A549 (cell line): ENCODE measurements at regions of chr13 and their contacts with region 1.

Region 1: DNA sequence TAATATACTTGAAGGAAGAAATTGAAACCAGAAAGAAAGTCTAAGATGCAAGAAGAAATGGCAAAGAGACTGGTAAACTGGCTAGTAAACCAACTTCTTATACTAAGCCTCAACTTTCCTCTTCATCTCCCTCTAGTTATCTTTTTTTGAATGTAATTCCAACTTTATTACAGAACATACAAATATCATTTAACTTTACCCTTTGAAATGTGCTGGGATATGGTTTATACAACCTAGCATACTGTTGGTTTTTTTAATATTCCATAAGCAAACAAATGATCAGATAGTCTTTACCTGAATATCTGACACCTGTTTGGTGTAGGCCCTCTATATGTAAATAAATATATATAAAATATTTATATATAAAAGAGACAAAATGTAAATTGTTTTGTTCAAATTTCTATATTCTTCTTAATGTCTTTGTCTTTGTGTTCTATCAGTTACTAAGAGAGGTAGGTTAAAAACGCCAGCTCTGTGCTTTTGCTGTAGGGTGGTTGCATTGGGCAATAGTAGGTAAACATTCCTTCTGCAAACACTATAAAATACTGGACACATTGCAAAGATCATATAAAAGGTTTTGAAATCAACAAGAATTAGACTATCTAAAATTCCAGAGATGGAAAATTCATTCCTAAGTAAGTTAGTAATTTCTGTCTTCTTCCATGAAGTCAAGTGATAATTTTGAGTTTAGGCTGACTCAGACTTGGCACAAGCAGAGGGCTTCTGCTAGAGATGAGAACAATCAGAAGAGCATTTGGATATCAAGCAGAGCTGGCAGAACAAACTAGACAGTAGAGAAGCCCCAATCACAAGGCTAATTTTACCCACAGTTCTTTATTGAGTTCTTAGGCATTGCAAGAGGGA is 383.3 kb downstream of the RFC3 start:
- DNase-seq: peak; percentile 18 to 89
- ATAC-seq: peak; percentile 97 to 98
- H3K4me3 ChIP-seq: no peak overlapping the region
- H3K27ac ChIP-seq: peak overlapping the region; percentile 98 to 99
- H3K4me1 ChIP-seq: peaks cover 22% of the 10 kb centered on the region
- CTCF ChIP-seq: no peak
- EP300 ChIP-seq: peak; percentile 96 to 98
- POLR2A ChIP-seq: no peak
- RAD21 ChIP-seq: peak; percentile 42 to 79

Region 2: GRCh38 chr13:34025746-34026145 is 175.5 kb before region 1 on chr13:
- CTCF ChIA-PET with region 1: no interaction called
- POLR2A ChIA-PET with region 1: no interaction called
- DNase-seq: no peak
- ATAC-seq: no peak
- H3K4me3 ChIP-seq: no peak overlapping the region
- H3K27ac ChIP-seq: peak overlapping the region in 1 of 2 experiments; percentile 49; a peak in 2 of 6 replicates
- H3K4me1 ChIP-seq: peaks cover under 1% of the 10 kb centered on the region; the same call in 1 of the 3 replicates
- CTCF ChIP-seq: no peak
- EP300 ChIP-seq: no peak
- POLR2A ChIP-seq: no peak
- RAD21 ChIP-seq: no peak

Region 3: DNA sequence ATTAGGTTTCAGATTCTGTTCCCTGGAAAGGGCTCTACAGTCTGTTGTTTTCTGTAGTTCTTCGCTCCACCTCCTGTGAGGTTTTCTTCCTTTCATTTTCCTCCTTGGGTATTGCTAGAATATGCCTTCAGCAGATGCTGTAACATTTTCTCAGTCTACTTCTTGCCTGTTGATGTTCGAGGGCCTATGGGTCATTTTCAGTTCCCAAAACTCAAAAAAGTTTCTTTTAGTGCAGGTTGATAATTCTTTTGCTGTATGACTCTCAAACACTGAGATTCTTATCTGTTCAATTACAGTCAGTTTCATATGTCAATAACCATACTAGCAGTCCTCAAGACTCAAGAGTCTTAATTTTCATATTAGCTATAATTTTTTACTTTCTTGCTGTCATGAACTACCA is 115.0 kb before region 1 on chr13:
- CTCF ChIA-PET with region 1: no interaction called
- POLR2A ChIA-PET with region 1: no interaction called
- DNase-seq: no peak
- ATAC-seq: no peak
- H3K4me3 ChIP-seq: no peak overlapping the region
- H3K27ac ChIP-seq: no peak overlapping the region
- H3K4me1 ChIP-seq: no peaks in the 10 kb centered on the region
- CTCF ChIP-seq: no peak
- EP300 ChIP-seq: no peak
- POLR2A ChIP-seq: no peak
- RAD21 ChIP-seq: no peak

Region 4: DNA sequence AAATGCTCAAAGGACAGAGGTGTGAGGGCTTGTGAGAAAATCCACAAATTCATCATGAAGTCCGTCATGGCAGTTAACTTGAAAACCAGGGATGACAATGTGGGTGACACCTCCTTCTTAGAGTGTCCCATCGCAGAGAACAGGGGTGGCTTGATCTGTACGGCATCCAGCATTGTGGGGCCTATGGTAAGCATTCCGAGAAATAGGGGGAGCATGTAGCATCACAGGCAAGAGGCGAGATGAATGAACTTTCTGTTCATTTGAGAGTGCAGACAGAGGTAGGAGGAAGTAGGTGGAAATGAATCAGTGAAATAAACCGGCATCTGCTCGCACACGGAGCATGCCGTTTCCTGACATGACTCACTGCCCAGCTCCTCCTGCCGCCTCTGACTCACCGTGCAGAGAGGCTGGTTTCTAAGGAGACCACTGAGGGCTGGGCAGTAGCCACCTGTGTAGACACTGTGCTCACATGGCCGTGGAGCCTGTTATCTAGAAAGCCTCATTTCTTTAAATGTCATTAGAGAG is 44.4 kb before region 1 on chr13:
- CTCF ChIA-PET with region 1: interaction called, 3 read pairs
- POLR2A ChIA-PET with region 1: interaction called, 11 read pairs
- DNase-seq: peak; percentile 51 to 95
- ATAC-seq: peak; percentile 98
- H3K4me3 ChIP-seq: peak overlapping the region; percentile 28; the same call in 2 of the 3 replicates
- H3K27ac ChIP-seq: peak overlapping the region; percentile 94 to 95
- H3K4me1 ChIP-seq: peaks cover 41% of the 10 kb centered on the region
- CTCF ChIP-seq: no peak
- EP300 ChIP-seq: peak; percentile 39 to 67; a peak in 3 of 5 replicates
- POLR2A ChIP-seq: no peak
- RAD21 ChIP-seq: peak in 1 of 2 experiments; percentile 42; a peak in 1 of 5 replicates

Region 5: DNA sequence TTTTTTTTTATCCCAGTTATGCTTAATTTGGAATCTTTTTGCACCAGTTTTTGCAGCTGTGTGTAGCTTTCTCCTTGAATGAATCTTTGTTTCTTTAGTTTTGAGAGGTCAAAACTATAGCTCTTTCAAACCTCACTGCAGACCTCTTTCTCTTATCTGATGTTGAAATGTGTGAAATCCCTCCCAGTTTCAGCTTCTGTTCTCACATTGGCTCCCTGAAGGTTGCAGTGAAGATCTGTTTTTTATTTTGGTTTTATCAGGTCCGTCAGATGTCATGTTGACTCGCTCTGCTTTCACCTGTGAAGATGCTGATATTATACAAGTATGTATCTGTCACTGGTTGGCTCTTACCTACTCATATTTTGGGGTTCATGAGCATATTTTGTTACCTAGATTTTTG is 11.3 kb before region 1 on chr13:
- CTCF ChIA-PET with region 1: no interaction called
- POLR2A ChIA-PET with region 1: no interaction called
- DNase-seq: no peak
- ATAC-seq: no peak
- H3K4me3 ChIP-seq: no peak overlapping the region
- H3K27ac ChIP-seq: no peak overlapping the region
- H3K4me1 ChIP-seq: no peaks in the 10 kb centered on the region
- CTCF ChIP-seq: no peak
- EP300 ChIP-seq: no peak
- POLR2A ChIP-seq: no peak
- RAD21 ChIP-seq: no peak

Region 6: GRCh38 chr13:34349091-34349722 is 147.9 kb after region 1 on chr13:
- CTCF ChIA-PET with region 1: no interaction called
- POLR2A ChIA-PET with region 1: no interaction called
- DNase-seq: peak in 1 of 2 experiments; percentile 79
- ATAC-seq: peak; percentile 34 to 75; a peak in 4 of 6 replicates
- H3K4me3 ChIP-seq: no peak overlapping the region
- H3K27ac ChIP-seq: peak overlapping the region; percentile 77 to 91
- H3K4me1 ChIP-seq: peaks cover 31% of the 10 kb centered on the region
- CTCF ChIP-seq: no peak
- EP300 ChIP-seq: peak; percentile 31 to 59; a peak in 2 of 5 replicates
- POLR2A ChIP-seq: no peak
- RAD21 ChIP-seq: peak in 1 of 2 experiments; percentile 46; a peak in 1 of 5 replicates